Activated CD8-positive, alpha-beta T cell treated with anti-CD3 and anti-CD28 coated beads for 36 hours (primary cell): ENCODE measurements at regions of chr9 and their contacts with region 1.

Region 1: DNA sequence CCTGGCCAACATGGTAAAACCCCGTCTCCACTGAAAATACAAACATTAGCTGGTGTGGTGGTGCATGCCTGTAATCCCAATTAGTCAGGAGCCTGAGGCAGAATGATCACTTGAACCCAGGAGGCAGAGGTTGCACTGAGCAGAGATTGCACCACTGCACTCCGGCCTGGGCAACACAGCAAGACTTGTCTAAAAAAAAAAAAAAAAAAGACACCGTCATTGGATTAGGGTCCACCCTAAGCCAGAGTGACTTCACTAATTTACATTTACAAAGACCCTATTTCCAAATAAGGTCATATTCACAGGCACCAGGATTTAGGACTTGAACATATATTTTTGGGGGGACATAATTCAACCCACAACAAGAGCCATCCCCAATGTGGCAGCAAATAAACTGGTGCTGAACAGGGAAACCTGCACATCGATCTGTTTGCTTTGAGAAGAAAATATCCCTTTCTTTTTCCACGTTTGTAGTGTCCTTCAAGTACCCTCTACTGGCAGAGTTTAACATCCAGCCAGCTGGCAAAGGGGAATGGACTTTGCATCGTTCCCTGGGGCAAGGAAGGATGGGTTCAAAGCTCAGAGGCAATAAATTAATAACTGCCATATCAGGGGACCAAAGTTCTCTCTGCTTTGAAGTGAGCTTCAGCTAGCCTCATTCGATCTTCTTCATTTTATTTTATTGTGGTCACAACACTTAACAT is 3.7 kb upstream of the DNAJC25 start:
- DNase-seq: no peak
- ATAC-seq: no peak
- H3K4me3 Mint-ChIP-seq: no peak overlapping the region
- H3K27ac Mint-ChIP-seq: no peak overlapping the region
- H3K4me1 Mint-ChIP-seq: peaks cover 2% of the 10 kb centered on the region
- H3K27me3 Mint-ChIP-seq: peaks cover 3% of the 10 kb centered on the region
- CTCF ChIP-seq: no peak

Region 2: GRCh38 chr9:111572950-111573604 is 54.3 kb before region 1 on chr9:
- CTCF ChIA-PET with region 1: no interaction called
- POLR2A ChIA-PET with region 1: no interaction called
- intact Hi-C with region 1: no loop called
- DNase-seq: no peak
- ATAC-seq: no peak
- H3K4me3 Mint-ChIP-seq: no peak overlapping the region
- H3K27ac Mint-ChIP-seq: no peak overlapping the region
- H3K4me1 Mint-ChIP-seq: no peaks in the 10 kb centered on the region
- H3K27me3 Mint-ChIP-seq: no peaks in the 10 kb centered on the region
- CTCF ChIP-seq: no peak

Region 3: GRCh38 chr9:111613441-111614039 is 13.9 kb before region 1 on chr9:
- CTCF ChIA-PET with region 1: no interaction called
- POLR2A ChIA-PET with region 1: no interaction called
- intact Hi-C with region 1: no loop called
- DNase-seq: no peak
- ATAC-seq: no peak
- H3K4me3 Mint-ChIP-seq: no peak overlapping the region
- H3K27ac Mint-ChIP-seq: no peak overlapping the region
- H3K4me1 Mint-ChIP-seq: no peaks in the 10 kb centered on the region
- H3K27me3 Mint-ChIP-seq: peaks cover 18% of the 10 kb centered on the region
- CTCF ChIP-seq: no peak

Region 4: GRCh38 chr9:111648066-111648465 is 20.7 kb after region 1 on chr9:
- CTCF ChIA-PET with region 1: no interaction called
- POLR2A ChIA-PET with region 1: no interaction called
- intact Hi-C with region 1: no loop called
- DNase-seq: no peak
- ATAC-seq: no peak
- H3K4me3 Mint-ChIP-seq: no peak overlapping the region
- H3K27ac Mint-ChIP-seq: no peak overlapping the region
- H3K4me1 Mint-ChIP-seq: no peaks in the 10 kb centered on the region
- H3K27me3 Mint-ChIP-seq: no peaks in the 10 kb centered on the region
- CTCF ChIP-seq: no peak

Region 5: DNA sequence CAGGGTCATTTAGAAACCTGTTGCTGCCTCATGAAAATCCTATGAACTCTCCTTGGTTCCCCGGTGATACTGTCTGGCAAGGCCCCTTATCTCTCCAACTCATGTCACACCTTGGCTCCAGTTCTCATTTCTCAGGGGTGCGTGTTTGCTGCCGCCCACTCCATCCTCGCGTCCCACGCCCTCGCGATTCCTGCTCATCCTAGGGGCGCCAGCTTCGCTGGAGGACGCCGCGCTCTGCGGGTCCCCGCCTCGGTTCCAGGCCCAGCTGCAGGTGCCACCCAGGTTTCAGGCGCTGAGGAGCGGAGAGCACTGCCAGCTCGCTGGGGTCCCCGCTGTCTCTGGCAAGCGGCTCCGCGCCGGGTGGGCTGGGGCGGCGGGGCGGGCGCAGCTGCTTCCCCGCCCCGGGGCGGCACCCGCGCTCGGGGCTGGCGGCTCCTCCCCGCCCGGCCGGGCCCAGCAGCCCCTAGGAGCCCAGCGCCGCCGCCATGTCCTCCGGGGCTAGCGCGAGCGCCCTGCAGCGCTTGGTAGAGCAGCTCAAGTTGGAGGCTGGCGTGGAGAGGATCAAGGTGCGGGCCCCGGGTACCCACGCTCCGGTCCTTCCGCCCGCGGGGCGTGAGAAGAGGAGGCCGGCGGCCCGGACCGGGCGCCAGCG is 33.9 kb after region 1 on chr9 and contains the start of gene GNG10:
- CTCF ChIA-PET with region 1: interaction called, 3 read pairs
- POLR2A ChIA-PET with region 1: interaction called, 7 read pairs
- intact Hi-C with region 1: loop called (anchors 5 kb)
- DNase-seq: peak; percentile 70
- ATAC-seq: peak; percentile 96
- H3K4me3 Mint-ChIP-seq: peak within 1 kb of the TSS; percentile 93
- H3K27ac Mint-ChIP-seq: peak within 1 kb of the TSS; percentile 91
- H3K4me1 Mint-ChIP-seq: peaks cover 33% of the 10 kb centered on the region
- H3K27me3 Mint-ChIP-seq: peaks cover 3% of the 10 kb centered on the region
- CTCF ChIP-seq: no peak
- total RNA-seq, gene GNG10: 14.3 to 17.2 TPM

Region 6: DNA sequence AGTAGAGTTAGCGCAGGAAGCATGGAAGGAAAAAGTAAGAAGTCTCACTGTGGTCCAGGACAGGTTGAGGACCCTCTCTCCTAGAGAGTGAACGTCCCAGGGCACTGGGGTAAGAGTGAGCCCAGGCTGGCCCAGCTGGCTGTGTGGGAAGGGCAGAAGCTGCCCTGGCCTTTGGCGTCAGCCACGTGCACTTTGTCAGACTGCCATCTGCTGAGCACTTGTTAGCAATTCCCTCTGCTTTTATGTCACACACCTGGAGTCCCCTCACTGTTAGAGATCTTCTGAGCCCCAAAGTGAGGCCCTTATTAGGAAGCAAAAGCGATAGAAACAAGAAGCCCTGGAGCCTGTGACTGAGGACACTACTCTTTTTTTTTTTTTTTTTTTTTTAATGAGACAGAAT is 348.3 kb after region 1 on chr9:
- CTCF ChIA-PET with region 1: no interaction called
- POLR2A ChIA-PET with region 1: no interaction called
- intact Hi-C with region 1: no loop called
- DNase-seq: peak; percentile 38
- ATAC-seq: peak; percentile 53
- H3K4me3 Mint-ChIP-seq: no peak overlapping the region
- H3K27ac Mint-ChIP-seq: no peak overlapping the region
- H3K4me1 Mint-ChIP-seq: peaks cover 6% of the 10 kb centered on the region
- H3K27me3 Mint-ChIP-seq: peaks cover 2% of the 10 kb centered on the region
- CTCF ChIP-seq: no peak